Psoas muscle (tissue), 8 donors: ENCODE measurements at regions of chr7 and their contacts with region 1.

Region 1: GRCh38 chr7:124077546-124077945 is 44.7 kb upstream of the TMEM229A start:
- DNase-seq: no peak
- ATAC-seq: no peak
- H3K4me3 ChIP-seq: no peak overlapping the region
- H3K27ac ChIP-seq: no peak overlapping the region
- H3K4me1 ChIP-seq: no peaks in the 10 kb centered on the region
- H3K27me3 ChIP-seq: no peaks in the 10 kb centered on the region
- CTCF ChIP-seq: no peak

Region 2: GRCh38 chr7:123797673-123798527 is 279.6 kb before region 1 on chr7:
- intact Hi-C with region 1: no loop called
- DNase-seq: no peak
- ATAC-seq: peak; percentile 82 to 90 (median 86)
- H3K4me3 ChIP-seq: no peak overlapping the region
- H3K27ac ChIP-seq: peak overlapping the region; percentile 44
- H3K4me1 ChIP-seq: peaks cover 11% of the 10 kb centered on the region
- H3K27me3 ChIP-seq: no peaks in the 10 kb centered on the region
- CTCF ChIP-seq: peak; percentile 69

Region 3: GRCh38 chr7:123811056-123811455 is 266.5 kb before region 1 on chr7:
- intact Hi-C with region 1: loop called in 1 of 2 experiments (anchors 5 kb)
- DNase-seq: no peak
- ATAC-seq: no peak
- H3K4me3 ChIP-seq: no peak overlapping the region
- H3K27ac ChIP-seq: no peak overlapping the region
- H3K4me1 ChIP-seq: no peaks in the 10 kb centered on the region
- H3K27me3 ChIP-seq: no peaks in the 10 kb centered on the region
- CTCF ChIP-seq: no peak

Region 4: GRCh38 chr7:124113045-124113444 is 35.5 kb after region 1 on chr7:
- intact Hi-C with region 1: no loop called
- DNase-seq: no peak
- ATAC-seq: no peak
- H3K4me3 ChIP-seq: no peak overlapping the region
- H3K27ac ChIP-seq: no peak overlapping the region
- H3K4me1 ChIP-seq: no peaks in the 10 kb centered on the region
- H3K27me3 ChIP-seq: no peaks in the 10 kb centered on the region
- CTCF ChIP-seq: no peak

Region 5: GRCh38 chr7:124124201-124124600 is 46.7 kb after region 1 on chr7:
- intact Hi-C with region 1: no loop called
- DNase-seq: no peak
- ATAC-seq: no peak
- H3K4me3 ChIP-seq: no peak overlapping the region
- H3K27ac ChIP-seq: no peak overlapping the region
- H3K4me1 ChIP-seq: no peaks in the 10 kb centered on the region
- H3K27me3 ChIP-seq: no peaks in the 10 kb centered on the region
- CTCF ChIP-seq: no peak

Region 6: GRCh38 chr7:124322561-124322960 is 245.0 kb after region 1 on chr7:
- intact Hi-C with region 1: no loop called
- DNase-seq: no peak
- ATAC-seq: no peak
- H3K4me3 ChIP-seq: no peak overlapping the region
- H3K27ac ChIP-seq: no peak overlapping the region
- H3K4me1 ChIP-seq: no peaks in the 10 kb centered on the region
- H3K27me3 ChIP-seq: no peaks in the 10 kb centered on the region
- CTCF ChIP-seq: no peak